Dorsolateral prefrontal cortex (tissue), 120 donors: ENCODE measurements at regions of chr19 and their contacts with region 1.

Region 1: DNA sequence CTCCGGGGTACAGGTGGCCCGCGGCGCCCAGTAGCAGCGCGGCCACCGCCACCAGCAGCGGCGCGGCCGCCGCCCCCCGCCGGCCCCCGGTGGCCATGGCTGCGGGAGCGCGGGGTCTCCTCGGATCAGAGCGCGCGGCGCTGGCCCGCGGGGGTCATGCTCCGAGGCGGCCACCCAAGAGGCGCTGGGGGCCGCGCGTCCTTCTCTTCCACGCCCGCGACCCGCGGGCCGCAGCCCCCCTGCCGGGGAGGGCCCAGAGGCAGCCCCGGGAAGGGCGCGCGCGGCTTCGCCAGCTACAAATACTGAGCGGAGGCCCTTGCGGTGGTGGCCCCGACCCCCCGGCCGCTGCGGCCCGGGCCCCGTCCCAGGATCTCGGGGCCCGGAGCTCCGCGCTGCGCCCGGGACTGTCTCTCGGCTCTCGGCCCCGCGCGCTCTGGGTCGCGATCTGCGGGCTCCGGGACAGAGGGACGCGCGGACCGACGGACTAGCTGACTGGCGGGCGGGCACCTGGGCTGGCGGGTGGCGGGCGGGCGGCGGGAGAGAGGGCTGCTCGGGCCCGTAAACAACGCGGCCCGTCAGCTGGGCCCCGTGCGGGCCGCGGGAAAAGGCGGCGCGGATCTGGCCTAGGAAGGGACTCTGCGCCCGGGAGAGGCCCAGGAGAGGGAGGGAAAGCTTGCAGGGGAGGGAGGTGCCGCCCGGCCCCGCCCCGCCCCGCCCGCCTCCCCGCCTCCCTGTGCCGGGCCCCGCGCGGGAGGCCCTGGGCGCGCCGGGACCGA is at the start of gene INSR:
- DNase-seq: peak; percentile 74 to 93 (median 83)
- H3K4me3 ChIP-seq: peak within 1 kb of the TSS; percentile 72 to 100 (median 92)
- H3K27ac ChIP-seq: peak within 1 kb of the TSS; percentile 20 to 99 (median 92)
- H3K27me3 ChIP-seq: no peaks in the 10 kb centered on the region
- CTCF ChIP-seq: no peak
- total RNA-seq, gene INSR: 37.5 to 83.8 (median 56.2) TPM

Region 2: GRCh38 chr19:7104747-7105447 is 189.1 kb before region 1 on chr19:
- intact Hi-C with region 1: loop called in 1 of 2 experiments (anchors 5 kb)
- DNase-seq: peak in 1 of 10 donors; percentile 24
- H3K4me3 ChIP-seq: no peak overlapping the region
- H3K27ac ChIP-seq: no peak overlapping the region
- H3K27me3 ChIP-seq: no peaks in the 10 kb centered on the region
- CTCF ChIP-seq: no peak

Region 3: GRCh38 chr19:7197760-7198696 is 96.0 kb before region 1 on chr19:
- intact Hi-C with region 1: loop called (anchors 1 kb)
- DNase-seq: peak; percentile 78 to 94 (median 90)
- H3K4me3 ChIP-seq: peak overlapping the region; percentile 48 to 100 (median 87)
- H3K27ac ChIP-seq: peak overlapping the region in 58 of 59 donors; percentile 20 to 94 (median 87)
- H3K27me3 ChIP-seq: no peaks in the 10 kb centered on the region
- CTCF ChIP-seq: peak in 32 of 56 donors; percentile 9 to 47 (median 31)

Region 4: GRCh38 chr19:7242601-7243258 is 51.3 kb before region 1 on chr19:
- intact Hi-C with region 1: loop called in 1 of 2 experiments (anchors 5 kb)
- DNase-seq: no peak
- H3K4me3 ChIP-seq: peak overlapping the region in 30 of 59 donors; percentile 0 to 38 (median 16)
- H3K27ac ChIP-seq: peak overlapping the region in 56 of 59 donors; percentile 6 to 88 (median 73)
- H3K27me3 ChIP-seq: no peaks in the 10 kb centered on the region
- CTCF ChIP-seq: peak in 4 of 56 donors; percentile 7 to 33 (median 10)

Region 5: GRCh38 chr19:7415163-7415858 is 121.3 kb after region 1 on chr19:
- intact Hi-C with region 1: no loop called
- DNase-seq: peak in 1 of 10 donors; percentile 19
- H3K4me3 ChIP-seq: no peak overlapping the region
- H3K27ac ChIP-seq: peak overlapping the region in 18 of 59 donors; percentile 4 to 77 (median 48)
- H3K27me3 ChIP-seq: no peaks in the 10 kb centered on the region
- CTCF ChIP-seq: no peak